ENCODE measurements at regions of chr5 and their contacts with region 1.

Region 1: DNA sequence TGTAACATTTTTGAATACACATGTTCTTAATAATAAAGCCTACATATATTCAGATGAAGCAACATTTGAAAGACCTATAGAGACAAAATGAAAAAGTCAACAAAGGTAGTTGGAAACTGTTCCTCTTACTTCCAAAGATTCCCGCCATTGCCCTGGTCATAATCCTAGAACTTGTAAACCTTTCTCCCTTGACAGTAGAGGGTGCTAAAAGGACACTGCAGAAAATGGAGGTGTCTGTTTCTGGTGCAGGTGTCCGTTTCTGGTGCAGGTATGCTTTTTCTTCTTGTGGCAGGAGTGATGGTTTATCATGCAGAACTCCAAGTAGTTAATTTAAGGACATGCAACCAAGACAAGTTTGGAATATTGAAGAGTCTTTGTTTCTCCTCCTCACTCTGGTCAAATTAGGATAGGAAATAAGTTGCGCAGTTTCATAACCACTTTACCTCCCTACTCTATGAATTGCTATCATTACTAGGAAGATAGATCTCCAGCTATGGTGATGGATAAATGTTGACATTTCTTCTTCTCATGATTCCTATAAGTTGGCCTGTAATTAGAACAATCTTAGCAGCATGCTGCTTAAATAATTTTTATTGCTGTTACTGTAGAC is 56.0 kb upstream of the FAM174A start:
- DNase-seq: peak; percentile 7
- ATAC-seq: no peak
- H3K4me3 ChIP-seq: no peak overlapping the region
- H3K27ac ChIP-seq: no peak overlapping the region
- H3K4me1 ChIP-seq: no peaks in the 10 kb centered on the region
- H3K27me3 ChIP-seq: no peaks in the 10 kb centered on the region
- CTCF ChIP-seq: peak; percentile 42
- POLR2A ChIP-seq: no peak
- RAD21 ChIP-seq: peak; percentile 54

Region 2: GRCh38 chr5:101326766-101327165 is 847.6 kb after region 1 on chr5:
- CTCF ChIA-PET with region 1: no interaction called
- POLR2A ChIA-PET with region 1: no interaction called
- dilution Hi-C with region 1: no loop called
- in situ Hi-C with region 1: no loop called
- intact Hi-C with region 1: no loop called
- DNase-seq: no peak
- ATAC-seq: no peak
- H3K4me3 ChIP-seq: no peak overlapping the region
- H3K27ac ChIP-seq: no peak overlapping the region
- H3K4me1 ChIP-seq: no peaks in the 10 kb centered on the region
- H3K27me3 ChIP-seq: no peaks in the 10 kb centered on the region
- CTCF ChIP-seq: no peak
- POLR2A ChIP-seq: no peak
- RAD21 ChIP-seq: no peak

Region 3: DNA sequence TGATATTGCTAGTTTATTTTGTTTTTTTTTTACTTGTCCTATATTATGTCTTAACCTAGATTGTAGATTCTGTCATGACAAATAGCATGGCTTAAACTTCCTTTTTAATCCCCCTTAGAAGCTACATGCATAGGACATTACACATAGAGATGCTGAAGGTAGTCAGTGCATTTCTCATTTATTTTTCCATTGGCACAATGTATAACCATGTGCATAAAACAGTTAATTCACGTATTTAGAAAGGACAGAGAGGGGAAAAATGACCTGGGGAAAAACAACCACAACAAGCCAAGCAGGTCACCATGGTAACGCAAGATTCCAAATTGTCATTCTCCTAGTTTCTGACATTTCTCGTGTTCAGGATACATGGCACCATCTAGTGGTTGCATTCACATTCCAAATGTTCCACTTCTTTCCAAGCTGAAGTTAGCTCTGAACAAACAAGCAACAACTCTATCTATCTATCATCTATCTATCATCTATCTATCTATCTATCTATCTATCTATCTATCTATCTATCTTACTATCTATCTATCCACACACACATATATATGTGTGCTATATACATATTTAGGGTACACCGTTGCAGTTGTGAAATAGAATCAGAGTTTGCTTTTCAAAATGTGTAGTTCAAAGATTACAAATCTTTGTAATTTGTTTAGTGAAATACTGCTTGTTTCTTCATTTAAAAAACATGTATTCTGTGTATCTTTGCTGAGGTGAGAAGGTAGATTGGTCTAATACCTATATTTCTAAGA is 911.1 kb after region 1 on chr5:
- CTCF ChIA-PET with region 1: interaction called, 3 read pairs
- POLR2A ChIA-PET with region 1: no interaction called
- dilution Hi-C with region 1: no loop called
- in situ Hi-C with region 1: no loop called
- intact Hi-C with region 1: loop called (anchors 2 kb)
- DNase-seq: peak; percentile 45
- ATAC-seq: peak; percentile 24; the same call in 1 of the 2 replicates
- H3K4me3 ChIP-seq: no peak overlapping the region
- H3K27ac ChIP-seq: no peak overlapping the region
- H3K4me1 ChIP-seq: no peaks in the 10 kb centered on the region
- H3K27me3 ChIP-seq: no peaks in the 10 kb centered on the region
- CTCF ChIP-seq: peak; percentile 55
- POLR2A ChIP-seq: no peak
- RAD21 ChIP-seq: peak; percentile 64